GM18951 (cell line): ENCODE measurements at regions of chr11 and their contacts with region 1.

Region 1: GRCh38 chr11:30917859-30918478 is 331.8 kb upstream of the MPPED2 start:
- POLR2A ChIP-seq: no peak

Region 2: DNA sequence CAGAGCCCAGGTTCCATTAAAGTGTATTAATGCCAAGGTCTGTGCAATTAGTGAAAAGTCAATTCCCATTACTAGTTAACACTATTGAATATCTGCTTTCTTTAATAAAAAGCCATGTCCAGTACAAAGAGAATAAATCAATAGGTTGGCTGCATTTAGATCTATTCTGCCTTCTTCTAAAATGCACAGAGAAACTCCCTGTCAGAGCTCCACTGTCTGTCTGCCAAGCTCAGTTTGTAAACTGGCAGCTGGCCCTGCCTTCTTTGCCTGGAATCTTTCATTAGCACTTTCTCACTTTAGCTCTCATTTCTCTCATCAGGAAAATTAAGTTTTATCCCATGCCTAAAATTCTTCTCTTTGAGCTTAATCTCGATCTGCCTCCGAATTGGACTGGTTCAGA is 559.4 kb before region 1 on chr11:
- in situ Hi-C with region 1: loop called (anchors 10 kb)
- POLR2A ChIP-seq: no peak